Dorsolateral prefrontal cortex (tissue), 120 donors: ENCODE measurements at regions of chr10 and their contacts with region 1.

Region 1: DNA sequence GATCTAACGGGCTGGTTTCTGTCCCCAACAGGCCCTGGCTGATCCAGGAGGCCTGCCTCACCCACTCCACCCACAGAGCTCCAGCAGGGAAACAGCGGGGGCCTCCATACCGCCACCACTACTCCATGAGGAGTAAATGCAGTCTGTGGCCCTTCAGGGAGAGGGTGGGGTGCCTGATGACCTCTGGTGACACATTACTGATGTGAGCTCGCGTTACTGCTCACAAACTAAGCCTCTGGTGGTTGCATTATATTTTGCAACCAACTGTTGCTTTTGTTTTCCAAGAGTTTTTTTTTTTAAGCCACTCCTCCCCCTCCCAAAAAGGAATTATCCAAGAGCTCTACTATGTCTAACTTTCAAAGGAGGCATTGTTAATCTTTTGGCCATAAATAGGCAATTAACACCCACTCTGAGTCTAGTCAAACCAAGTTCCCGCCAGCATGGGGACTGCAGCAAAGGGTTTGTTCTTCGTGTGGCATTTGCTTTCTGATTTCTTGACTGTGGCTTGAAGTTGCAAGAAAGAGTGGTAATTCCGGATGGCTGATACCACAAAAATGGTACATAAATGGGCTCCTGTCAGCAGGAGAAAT is 72.6 kb downstream of the FAM53B start:
- DNase-seq: peak in 9 of 10 donors; percentile 66 to 93 (median 88)
- H3K4me3 ChIP-seq: peak overlapping the region in 10 of 59 donors; percentile 0 to 30 (median 6)
- H3K27ac ChIP-seq: peak overlapping the region; percentile 71 to 100 (median 98)
- H3K27me3 ChIP-seq: no peaks in the 10 kb centered on the region
- CTCF ChIP-seq: peak in 53 of 56 donors; percentile 10 to 72 (median 51)

Region 2: GRCh38 chr10:124545351-124546054 is 126.1 kb before region 1 on chr10:
- intact Hi-C with region 1: no loop called
- DNase-seq: peak in 1 of 10 donors; percentile 49
- H3K4me3 ChIP-seq: peak overlapping the region in 4 of 59 donors; percentile 16 to 22 (median 18)
- H3K27ac ChIP-seq: peak overlapping the region in 28 of 59 donors; percentile 10 to 71 (median 42)
- H3K27me3 ChIP-seq: no peaks in the 10 kb centered on the region
- CTCF ChIP-seq: no peak

Region 3: DNA sequence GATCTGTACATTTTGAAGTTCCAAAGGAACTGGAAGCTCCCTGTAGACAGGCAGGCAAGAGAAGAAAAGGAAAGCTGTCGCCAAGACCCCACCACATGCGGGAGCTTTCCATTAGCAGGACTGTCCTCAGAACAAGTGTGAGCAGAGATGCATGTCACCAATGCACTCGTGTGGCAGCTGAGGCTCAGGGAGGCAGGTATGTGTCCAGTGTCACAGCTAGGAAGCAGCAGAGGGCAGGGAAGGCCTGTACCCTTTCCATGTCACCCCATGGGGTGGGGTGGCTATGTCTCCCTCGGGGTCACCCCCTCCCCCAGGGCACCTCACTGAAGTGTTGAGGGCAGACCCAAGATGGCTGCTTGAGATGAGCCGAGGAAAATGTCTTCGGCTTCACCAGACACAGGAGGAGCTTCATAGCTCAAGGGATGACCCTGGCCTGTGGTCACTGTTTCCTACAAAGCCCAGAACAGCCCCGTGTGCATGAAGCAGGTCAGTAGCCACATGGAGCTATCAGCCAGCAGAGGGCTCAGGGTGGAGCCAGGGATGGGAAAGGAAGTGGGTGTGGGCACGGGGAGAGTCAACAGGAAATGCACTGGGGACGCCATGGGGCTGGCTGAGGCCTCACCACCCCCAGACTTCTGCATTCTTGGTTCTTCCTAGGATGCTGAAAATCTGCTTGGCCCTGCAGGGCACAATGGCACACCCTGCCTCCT is 24.0 kb before region 1 on chr10:
- intact Hi-C with region 1: loop called in 1 of 2 experiments (anchors 2 kb)
- DNase-seq: peak in 1 of 10 donors; percentile 68
- H3K4me3 ChIP-seq: peak overlapping the region in 1 of 59 donors; percentile 27
- H3K27ac ChIP-seq: peak overlapping the region; percentile 79 to 99 (median 95)
- H3K27me3 ChIP-seq: no peaks in the 10 kb centered on the region
- CTCF ChIP-seq: peak in 37 of 56 donors; percentile 11 to 48 (median 29)

Region 4: GRCh38 chr10:124722798-124723783 is 51.5 kb after region 1 on chr10:
- intact Hi-C with region 1: loop called (anchors 5 kb)
- DNase-seq: peak in 4 of 10 donors; percentile 38 to 58 (median 52)
- H3K4me3 ChIP-seq: peak overlapping the region in 2 of 59 donors; percentile 5 to 17
- H3K27ac ChIP-seq: peak overlapping the region; percentile 82 to 100 (median 98)
- H3K27me3 ChIP-seq: no peaks in the 10 kb centered on the region
- CTCF ChIP-seq: peak in 2 of 56 donors; percentile 9 to 12